GM10248 (cell line): ENCODE measurements at regions of chr19 and their contacts with region 1.

Region 1: GRCh38 chr19:35931161-35931873 is 4.9 kb upstream of the LRFN3 start:
- DNase-seq: peak; percentile 99
- CTCF ChIP-seq: peak; percentile 100

Region 2: DNA sequence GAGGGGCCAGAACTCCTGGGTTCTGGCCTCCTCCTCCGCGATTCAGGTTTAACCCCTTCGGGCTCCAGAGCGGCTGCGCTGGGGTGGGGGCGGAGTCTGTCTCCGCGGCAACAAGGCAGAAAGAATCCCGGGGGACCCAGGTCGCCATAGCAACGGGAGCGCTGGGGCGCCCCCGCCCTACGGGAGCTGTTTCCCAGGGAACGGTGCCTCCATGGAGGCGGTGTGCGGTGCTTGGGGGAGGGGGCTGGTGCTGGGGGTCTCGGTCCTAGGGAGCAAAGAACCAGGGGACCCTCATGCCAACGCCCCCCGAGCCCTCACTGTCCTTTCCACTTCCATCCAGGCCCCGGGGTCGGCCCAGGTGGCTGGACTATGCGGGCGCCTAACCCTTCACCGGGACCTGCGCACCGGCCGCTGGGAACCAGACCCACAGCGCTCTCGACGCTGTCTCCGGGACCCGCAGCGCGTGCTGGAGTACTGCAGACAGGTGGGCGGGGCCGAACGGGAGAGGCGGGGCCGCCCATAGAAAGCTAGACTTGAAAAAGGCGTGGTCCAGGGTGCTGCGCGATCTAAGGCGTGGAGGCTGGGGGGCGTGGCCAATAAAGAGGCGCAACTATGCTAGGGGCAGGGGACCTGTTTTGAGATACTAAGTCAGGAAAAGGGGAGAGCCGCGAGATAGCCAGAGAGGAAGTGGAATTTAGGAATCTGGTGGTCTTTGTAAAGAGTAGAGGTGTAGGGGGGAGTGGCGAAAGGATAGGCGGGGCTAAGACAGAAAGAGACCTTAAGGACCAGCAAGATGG is 61.8 kb before region 1 on chr19:
- CTCF ChIA-PET with region 1: interaction called, 15 read pairs
- POLR2A ChIA-PET with region 1: no interaction called
- DNase-seq: peak; percentile 86
- CTCF ChIP-seq: no peak

Region 3: GRCh38 chr19:35879770-35880317 is 51.5 kb before region 1 on chr19:
- CTCF ChIA-PET with region 1: interaction called, 82 read pairs
- POLR2A ChIA-PET with region 1: interaction called, 5 read pairs
- DNase-seq: peak; percentile 85
- CTCF ChIP-seq: no peak

Region 4: DNA sequence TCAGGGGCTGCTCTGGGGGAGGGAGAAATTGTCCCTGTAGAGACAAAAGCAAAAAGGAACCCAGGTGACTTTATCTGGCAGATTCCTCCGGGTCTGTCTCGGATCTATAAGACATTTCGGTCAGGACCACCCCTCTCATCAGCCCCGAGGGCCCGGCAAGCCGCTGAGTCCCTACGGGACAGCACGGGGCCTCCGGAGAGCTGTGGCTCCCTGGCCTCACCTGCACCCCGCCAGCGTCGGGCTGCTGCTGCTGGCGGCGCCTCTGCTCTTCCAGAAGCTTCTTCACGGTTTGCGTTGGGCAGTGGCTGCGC is 32.9 kb before region 1 on chr19:
- CTCF ChIA-PET with region 1: interaction called, 27 read pairs
- POLR2A ChIA-PET with region 1: interaction called, 3 read pairs
- DNase-seq: no peak
- CTCF ChIP-seq: no peak

Region 5: GRCh38 chr19:35903550-35904179 is 27.7 kb before region 1 on chr19:
- CTCF ChIA-PET with region 1: interaction called, 10 read pairs
- POLR2A ChIA-PET with region 1: interaction called, 3 read pairs
- DNase-seq: peak; percentile 78
- CTCF ChIP-seq: no peak

Region 6: GRCh38 chr19:35955881-35956634 is 24.7 kb after region 1 on chr19:
- CTCF ChIA-PET with region 1: no interaction called
- POLR2A ChIA-PET with region 1: no interaction called
- DNase-seq: no peak
- CTCF ChIP-seq: no peak

Region 7: DNA sequence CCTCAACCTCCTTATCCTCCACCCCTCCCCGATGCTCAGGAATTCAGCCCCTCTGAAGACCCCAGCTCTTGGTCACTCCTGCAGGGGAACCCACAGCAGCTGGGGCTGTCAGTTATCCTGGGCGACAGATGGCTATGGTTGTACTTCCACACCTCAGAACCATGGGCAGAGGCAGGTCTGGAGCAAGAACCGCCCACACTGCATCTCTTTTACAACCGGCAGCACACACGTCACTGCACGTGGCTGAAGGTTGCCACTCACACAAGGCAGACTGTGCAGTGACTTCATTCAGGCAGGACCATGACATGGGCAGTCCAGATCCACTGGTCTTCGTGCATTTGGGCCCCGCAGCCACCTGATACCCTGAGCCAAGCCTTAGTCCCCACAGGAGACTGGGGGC is 42.2 kb after region 1 on chr19:
- CTCF ChIA-PET with region 1: no interaction called
- POLR2A ChIA-PET with region 1: interaction called, 10 read pairs
- DNase-seq: no peak
- CTCF ChIP-seq: no peak

Region 8: GRCh38 chr19:36032251-36033104 is 101.2 kb after region 1 on chr19 and contains the start of gene CLIP3:
- CTCF ChIA-PET with region 1: no interaction called
- POLR2A ChIA-PET with region 1: no interaction called
- DNase-seq: peak; percentile 81
- CTCF ChIP-seq: no peak